Dendritic cell treated with granulocyte-macrophage colony-stimulating factor and Interleukin-4, amounts not matched to agents 40 ng/mL and 50 ng/mL, for 4 days (primary cell): ENCODE measurements at regions of chr6 and their contacts with region 1.

Region 1: GRCh38 chr6:134436281-134436815 is 118.4 kb upstream of the SGK1 start:
- H3K4me3 Mint-ChIP-seq: no peak overlapping the region
- H3K27ac Mint-ChIP-seq: peak overlapping the region; percentile 86
- H3K4me1 Mint-ChIP-seq: peaks cover 43% of the 10 kb centered on the region
- H3K27me3 Mint-ChIP-seq: no peaks in the 10 kb centered on the region

Region 2: GRCh38 chr6:134235937-134236751 is 200.2 kb before region 1 on chr6:
- intact Hi-C with region 1: loop called (anchors 5 kb)
- H3K4me3 Mint-ChIP-seq: no peak overlapping the region
- H3K27ac Mint-ChIP-seq: peak overlapping the region; percentile 80
- H3K4me1 Mint-ChIP-seq: peaks cover 26% of the 10 kb centered on the region
- H3K27me3 Mint-ChIP-seq: no peaks in the 10 kb centered on the region

Region 3: DNA sequence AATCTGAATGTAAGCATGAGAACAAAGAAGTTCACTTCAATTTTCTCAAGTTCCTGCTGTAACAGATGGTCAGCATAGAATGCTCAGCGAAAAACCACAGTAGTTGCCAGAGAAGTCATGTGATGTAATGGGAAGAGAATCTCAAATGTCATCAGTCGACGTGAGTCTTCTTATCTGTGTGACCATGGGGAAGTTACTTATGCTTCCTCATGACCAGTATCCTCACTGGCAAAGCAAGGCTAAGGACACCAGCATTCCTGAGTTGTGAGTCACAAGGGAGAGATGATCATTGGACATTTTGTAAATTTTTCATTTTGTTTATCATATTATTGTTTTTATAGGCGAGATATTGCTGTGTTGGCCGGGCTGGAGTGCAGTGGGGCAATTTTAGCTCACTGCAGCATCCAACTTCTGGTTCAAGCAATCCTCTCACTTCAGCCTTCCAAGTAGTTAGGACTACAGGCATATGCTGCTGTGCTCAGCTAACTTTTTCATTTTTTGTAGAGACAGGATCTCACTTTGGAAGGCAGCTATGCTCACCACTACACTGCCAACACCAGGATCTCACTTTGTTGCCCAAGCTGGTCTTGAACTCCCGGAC is 140.3 kb before region 1 on chr6:
- intact Hi-C with region 1: loop called (anchors 5 kb)
- H3K4me3 Mint-ChIP-seq: no peak overlapping the region
- H3K27ac Mint-ChIP-seq: peak overlapping the region; percentile 83
- H3K4me1 Mint-ChIP-seq: peaks cover 42% of the 10 kb centered on the region
- H3K27me3 Mint-ChIP-seq: no peaks in the 10 kb centered on the region

Region 4: GRCh38 chr6:134373282-134373922 is 62.9 kb before region 1 on chr6:
- intact Hi-C with region 1: loop called (anchors 2 kb)
- H3K4me3 Mint-ChIP-seq: peak overlapping the region; percentile 55
- H3K27ac Mint-ChIP-seq: peak overlapping the region; percentile 93
- H3K4me1 Mint-ChIP-seq: peaks cover 66% of the 10 kb centered on the region
- H3K27me3 Mint-ChIP-seq: no peaks in the 10 kb centered on the region

Region 5: DNA sequence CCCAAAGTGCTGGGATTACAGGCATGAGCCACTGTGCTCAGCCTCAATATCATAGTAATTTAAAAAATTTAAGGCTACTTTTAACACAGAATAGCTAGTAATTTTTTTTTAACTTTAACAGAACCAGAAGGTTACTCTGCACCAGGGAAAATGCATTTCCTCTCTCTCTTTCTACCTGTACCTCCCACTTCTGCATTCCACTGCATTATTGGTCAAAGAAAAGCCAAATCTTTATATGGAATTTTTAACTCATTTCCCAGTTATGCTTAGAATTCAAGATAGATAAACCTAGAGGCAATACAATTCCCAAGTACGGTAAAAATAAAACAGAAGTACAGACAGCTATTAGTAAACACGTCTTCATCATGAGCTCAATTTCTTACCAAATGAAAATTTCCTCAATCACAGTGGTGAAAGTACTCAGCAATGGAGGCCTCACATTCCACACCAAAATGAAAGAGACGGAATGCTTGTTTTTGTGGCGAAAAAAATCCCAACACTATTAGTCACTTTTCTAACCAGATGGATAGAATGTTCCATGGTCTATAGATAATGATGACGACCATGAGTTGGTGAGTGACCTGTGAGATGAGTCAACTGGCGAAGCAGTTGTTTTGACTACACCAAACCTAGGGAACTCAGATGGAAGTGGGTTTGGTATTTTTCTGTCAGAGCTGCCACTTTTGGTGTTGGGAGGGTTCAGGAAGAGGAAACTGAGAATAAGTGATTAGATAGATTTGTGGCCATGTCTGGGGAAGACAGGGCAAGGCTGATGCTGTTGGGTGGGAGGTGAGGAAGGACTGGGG is 13.7 kb before region 1 on chr6:
- intact Hi-C with region 1: loop called (anchors 2 kb)
- H3K4me3 Mint-ChIP-seq: no peak overlapping the region
- H3K27ac Mint-ChIP-seq: peak overlapping the region; percentile 64
- H3K4me1 Mint-ChIP-seq: peaks cover 42% of the 10 kb centered on the region
- H3K27me3 Mint-ChIP-seq: peaks cover 3% of the 10 kb centered on the region

Region 6: DNA sequence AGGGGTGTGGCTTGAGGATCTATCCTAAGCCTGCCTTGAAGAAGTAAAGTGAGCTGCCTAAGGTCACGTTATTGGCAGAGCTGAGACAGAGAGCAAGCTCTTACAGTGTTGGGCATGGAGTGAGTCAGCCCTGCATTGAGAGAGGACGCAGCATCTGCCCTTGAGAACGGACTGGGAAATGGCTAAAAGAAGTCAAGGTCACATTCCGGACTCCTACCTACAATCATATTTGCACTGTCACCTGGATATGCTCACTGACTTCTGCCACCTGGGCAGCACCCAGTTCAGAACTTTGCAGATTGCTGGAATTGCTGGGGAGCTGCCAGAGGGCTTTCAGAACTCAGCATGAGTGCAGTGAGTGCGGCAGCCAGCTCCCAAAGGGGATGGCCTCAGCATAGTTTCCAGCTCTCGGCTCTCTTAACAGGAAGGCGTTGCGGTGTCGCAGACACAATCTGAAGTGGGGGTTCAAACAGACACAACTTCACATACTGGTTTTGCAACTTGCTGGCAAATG is 80.9 kb after region 1 on chr6:
- intact Hi-C with region 1: loop called (anchors 5 kb)
- H3K4me3 Mint-ChIP-seq: no peak overlapping the region
- H3K27ac Mint-ChIP-seq: peak overlapping the region; percentile 79
- H3K4me1 Mint-ChIP-seq: peaks cover 46% of the 10 kb centered on the region
- H3K27me3 Mint-ChIP-seq: no peaks in the 10 kb centered on the region

Region 7: DNA sequence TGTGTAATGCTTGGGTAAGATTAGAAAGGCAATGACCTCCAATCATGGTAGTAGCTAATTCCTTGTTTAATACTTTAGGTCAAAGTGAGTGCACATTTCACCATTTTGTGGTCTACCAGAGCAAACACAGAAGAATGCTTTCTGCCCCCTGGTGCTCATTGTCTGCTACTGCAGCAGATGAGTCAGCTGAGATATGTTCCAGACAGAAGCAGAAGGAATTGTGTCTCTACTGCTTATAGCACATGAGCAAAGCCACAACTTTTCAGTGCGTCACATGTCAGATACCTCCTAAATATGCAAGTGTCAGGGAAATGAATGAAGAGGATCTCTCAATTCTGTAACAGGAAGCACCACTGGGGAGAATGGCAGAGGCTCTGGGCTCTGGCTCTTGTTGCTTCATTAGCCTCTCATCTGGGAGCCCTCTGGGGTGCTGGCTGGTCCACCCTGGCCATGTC is 204.7 kb after region 1 on chr6:
- intact Hi-C with region 1: loop called (anchors 5 kb)
- H3K4me3 Mint-ChIP-seq: no peak overlapping the region
- H3K27ac Mint-ChIP-seq: peak overlapping the region; percentile 79
- H3K4me1 Mint-ChIP-seq: peaks cover 21% of the 10 kb centered on the region
- H3K27me3 Mint-ChIP-seq: no peaks in the 10 kb centered on the region